Calu3 (cell line): ENCODE measurements at regions of chr19 and their contacts with region 1.

Region 1: GRCh38 chr19:48970923-48971395 is 5.8 kb downstream of the FTL start:
- DNase-seq: peak; percentile 85
- H3K4me3 Mint-ChIP-seq: no peak overlapping the region
- H3K27ac Mint-ChIP-seq: no peak overlapping the region
- H3K4me1 Mint-ChIP-seq: no peaks in the 10 kb centered on the region
- H3K27me3 Mint-ChIP-seq: no peaks in the 10 kb centered on the region
- CTCF ChIP-seq: peak; percentile 95

Region 2: GRCh38 chr19:48738557-48739399 is 232.2 kb before region 1 on chr19:
- CTCF ChIA-PET with region 1: no interaction called
- intact Hi-C with region 1: no loop called
- DNase-seq: peak; percentile 98
- H3K4me3 Mint-ChIP-seq: peak overlapping the region; percentile 26
- H3K27ac Mint-ChIP-seq: no peak overlapping the region
- H3K4me1 Mint-ChIP-seq: peaks cover 8% of the 10 kb centered on the region
- H3K27me3 Mint-ChIP-seq: peaks cover 22% of the 10 kb centered on the region
- CTCF ChIP-seq: peak; percentile 72

Region 3: DNA sequence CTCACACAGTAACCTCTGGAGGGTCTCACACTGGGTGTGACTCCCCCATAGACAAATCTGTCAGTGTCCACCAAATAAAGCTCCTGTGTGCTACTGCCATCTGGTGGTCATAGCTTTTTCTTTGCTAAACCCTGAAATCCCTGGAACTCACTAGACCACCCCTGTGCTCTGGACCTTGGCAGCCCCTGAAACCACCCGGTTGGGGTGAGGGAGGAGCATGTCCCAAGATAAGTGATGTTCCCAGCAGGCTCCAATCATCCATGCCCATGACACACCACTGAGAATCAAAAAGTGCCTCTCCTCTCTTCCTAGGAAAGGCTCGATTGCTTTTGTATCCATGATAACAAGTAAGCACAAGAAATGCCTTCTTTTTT is 128.2 kb before region 1 on chr19:
- CTCF ChIA-PET with region 1: interaction called, 16 read pairs
- intact Hi-C with region 1: no loop called
- DNase-seq: peak; percentile 67
- H3K4me3 Mint-ChIP-seq: no peak overlapping the region
- H3K27ac Mint-ChIP-seq: peak overlapping the region; percentile 3
- H3K4me1 Mint-ChIP-seq: no peaks in the 10 kb centered on the region
- H3K27me3 Mint-ChIP-seq: no peaks in the 10 kb centered on the region
- CTCF ChIP-seq: peak; percentile 82

Region 4: GRCh38 chr19:48854103-48854502 is 116.9 kb before region 1 on chr19:
- CTCF ChIA-PET with region 1: interaction called, 10 read pairs
- intact Hi-C with region 1: no loop called
- DNase-seq: no peak
- H3K4me3 Mint-ChIP-seq: no peak overlapping the region
- H3K27ac Mint-ChIP-seq: no peak overlapping the region
- H3K4me1 Mint-ChIP-seq: peaks cover 7% of the 10 kb centered on the region
- H3K27me3 Mint-ChIP-seq: no peaks in the 10 kb centered on the region
- CTCF ChIP-seq: no peak

Region 5: DNA sequence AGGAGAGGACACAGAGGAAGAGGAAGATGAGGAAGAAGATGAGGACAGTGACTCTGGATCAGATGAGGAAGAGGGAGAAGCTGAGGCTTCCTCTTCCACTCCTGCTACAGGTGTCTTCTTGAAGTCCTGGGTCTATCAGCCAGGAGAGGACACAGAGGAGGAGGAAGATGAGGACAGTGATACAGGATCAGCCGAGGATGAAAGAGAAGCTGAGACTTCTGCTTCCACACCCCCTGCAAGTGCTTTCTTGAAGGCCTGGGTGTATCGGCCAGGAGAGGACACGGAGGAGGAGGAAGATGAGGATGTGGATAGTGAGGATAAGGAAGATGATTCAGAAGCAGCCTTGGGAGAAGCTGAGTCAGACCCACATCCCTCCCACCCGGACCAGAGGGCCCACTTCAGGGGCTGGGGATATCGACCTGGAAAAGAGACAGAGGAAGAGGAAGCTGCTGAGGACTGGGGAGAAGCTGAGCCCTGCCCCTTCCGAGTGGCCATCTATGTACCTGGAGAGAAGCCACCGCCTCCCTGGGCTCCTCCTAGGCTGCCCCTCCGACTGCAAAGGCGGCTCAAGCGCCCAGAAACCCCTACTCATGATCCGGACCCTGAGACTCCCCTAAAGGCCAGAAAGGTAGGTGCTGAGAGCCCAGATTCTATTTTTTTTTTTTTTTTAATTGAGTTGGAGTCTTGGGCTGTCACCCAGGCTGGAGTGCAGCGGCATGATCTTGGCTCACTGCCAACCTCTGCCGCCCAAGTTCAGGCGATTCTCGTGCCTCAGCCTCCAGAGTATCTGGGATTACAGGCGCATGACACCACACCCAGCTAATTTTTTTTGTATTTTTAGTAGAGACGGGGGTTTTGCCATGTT is 96.5 kb before region 1 on chr19:
- CTCF ChIA-PET with region 1: interaction called, 10 read pairs
- intact Hi-C with region 1: no loop called
- DNase-seq: no peak
- H3K4me3 Mint-ChIP-seq: peak overlapping the region; percentile 95
- H3K27ac Mint-ChIP-seq: peak overlapping the region; percentile 100
- H3K4me1 Mint-ChIP-seq: peaks cover 33% of the 10 kb centered on the region
- H3K27me3 Mint-ChIP-seq: peaks cover 8% of the 10 kb centered on the region
- CTCF ChIP-seq: no peak

Region 6: DNA sequence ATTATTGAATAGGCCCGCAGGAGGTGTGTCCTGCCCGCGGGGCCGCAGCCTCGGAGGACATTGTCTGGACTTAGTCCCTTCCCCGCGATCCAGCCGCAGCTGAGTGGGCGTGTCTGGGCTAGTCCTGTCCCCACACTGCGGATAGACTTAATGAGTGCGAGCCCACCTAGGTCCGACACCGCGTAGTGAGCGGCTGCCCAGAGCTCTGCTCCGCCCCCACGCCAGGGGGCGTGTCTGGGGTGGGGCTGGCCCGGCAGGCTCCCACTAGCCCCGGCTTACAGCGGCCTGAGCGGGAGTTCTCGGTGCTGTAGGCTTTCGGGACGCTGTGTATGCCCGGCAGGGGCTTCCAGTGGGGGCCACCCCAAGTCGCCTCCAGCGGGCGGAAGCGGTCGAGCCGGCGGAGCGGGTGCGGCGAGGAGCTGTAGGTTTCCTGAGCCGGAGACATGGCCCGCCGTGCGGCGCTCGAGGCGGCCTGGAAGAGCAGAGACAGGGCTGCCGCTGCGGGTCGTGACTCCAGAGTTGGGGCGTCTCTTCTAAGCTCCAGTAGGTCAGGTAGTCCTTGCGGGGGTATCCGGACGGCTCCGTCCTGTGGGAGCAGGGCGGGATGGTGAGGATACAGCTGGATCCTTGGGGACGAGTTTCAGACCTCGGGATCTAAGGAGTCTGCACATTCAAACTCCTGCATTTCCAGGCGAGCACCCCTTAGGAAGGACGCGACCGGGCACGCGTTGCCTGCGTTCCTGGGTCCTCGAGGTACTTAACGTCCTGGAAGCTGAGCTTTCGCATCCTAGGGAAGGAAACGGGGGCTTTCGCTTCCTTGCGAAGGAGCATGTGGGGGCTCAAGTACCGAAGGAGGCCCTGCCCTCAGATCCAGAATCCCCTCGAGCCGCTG is 85.3 kb after region 1 on chr19:
- CTCF ChIA-PET with region 1: no interaction called
- intact Hi-C with region 1: no loop called
- DNase-seq: peak; percentile 85
- H3K4me3 Mint-ChIP-seq: peak overlapping the region; percentile 95
- H3K27ac Mint-ChIP-seq: no peak overlapping the region
- H3K4me1 Mint-ChIP-seq: peaks cover 20% of the 10 kb centered on the region
- H3K27me3 Mint-ChIP-seq: peaks cover 16% of the 10 kb centered on the region
- CTCF ChIP-seq: peak; percentile 53